ENCODE measurements at regions of chr16 and their contacts with region 1.

Region 1: GRCh38 chr16:30429678-30430427 is at the start of gene DCTPP1:
- DNase-seq: peak; percentile 94 to 99 (median 95)
- ATAC-seq: peak; percentile 99
- H3K4me3 ChIP-seq: peak within 1 kb of the TSS; percentile 75
- H3K27ac ChIP-seq: peak within 1 kb of the TSS; percentile 84
- H3K4me1 ChIP-seq: peaks cover 15 to 36% of the 10 kb centered on the region in 2 experiments
- H3K27me3 ChIP-seq: no peaks in the 10 kb centered on the region
- CTCF ChIP-seq: peak; percentile 82 to 96 (median 88)
- EP300 ChIP-seq: peak; percentile 52
- POLR2A ChIP-seq: peak; percentile 82
- RAD21 ChIP-seq: peak; percentile 85 to 87
- polyA plus RNA-seq, gene DCTPP1: 45.0 to 80.6 TPM

Region 2: DNA sequence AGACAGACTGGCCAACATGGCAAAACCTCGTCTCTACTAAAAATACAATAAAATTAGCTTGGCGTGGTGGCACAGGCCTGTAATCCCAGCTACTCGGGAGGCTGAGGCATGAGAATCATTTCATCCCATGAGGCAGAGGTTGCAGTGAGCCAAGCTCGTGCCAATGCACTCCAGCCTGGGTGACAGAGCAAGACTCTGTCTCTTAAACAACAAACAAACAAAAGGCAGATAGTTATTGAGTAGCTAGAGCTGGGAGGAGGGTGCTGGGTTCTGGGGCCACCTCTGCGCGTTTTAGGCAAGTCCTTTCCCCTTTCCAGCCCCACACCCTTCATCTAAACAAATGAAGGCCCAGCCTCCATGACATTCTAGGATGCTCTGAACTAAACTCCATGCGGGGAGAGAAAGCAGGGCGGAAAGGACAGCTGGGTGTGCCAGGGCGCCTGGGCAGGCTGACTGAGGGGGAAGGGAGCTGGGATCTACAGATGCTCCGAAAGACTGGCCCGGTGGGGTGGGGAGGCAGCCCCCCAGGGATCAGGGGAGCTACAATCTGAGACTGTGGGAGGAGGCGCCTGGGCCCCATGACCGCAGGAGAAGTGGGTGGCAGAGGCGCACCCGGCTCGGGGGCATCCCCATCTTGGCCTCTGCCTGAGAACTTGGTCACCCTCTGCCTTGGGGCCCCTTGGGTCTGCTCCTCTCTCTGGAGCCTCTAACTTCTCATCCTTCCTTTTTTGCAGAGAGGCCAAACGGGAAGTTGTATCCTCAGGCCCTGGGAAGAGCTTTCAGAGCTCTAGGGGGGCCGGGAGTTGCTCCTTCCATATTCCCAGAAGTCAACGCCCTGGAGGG is 43.6 kb after region 1 on chr16:
- CTCF ChIA-PET with region 1: no interaction called
- POLR2A ChIA-PET with region 1: no interaction called
- in situ Hi-C with region 1: no loop called
- intact Hi-C with region 1: no loop called
- DNase-seq: no peak
- ATAC-seq: no peak
- H3K4me3 ChIP-seq: no peak overlapping the region
- H3K27ac ChIP-seq: no peak overlapping the region
- H3K4me1 ChIP-seq: peaks cover 0 to 15% of the 10 kb centered on the region in 2 experiments; a peak in 1 of 5 replicates
- H3K27me3 ChIP-seq: no peaks in the 10 kb centered on the region
- CTCF ChIP-seq: no peak
- EP300 ChIP-seq: no peak
- POLR2A ChIP-seq: no peak
- RAD21 ChIP-seq: no peak

Region 3: GRCh38 chr16:30628627-30629540 is 199.0 kb after region 1 on chr16:
- CTCF ChIA-PET with region 1: interaction called, 23 read pairs
- POLR2A ChIA-PET with region 1: interaction called, 3 read pairs
- in situ Hi-C with region 1: loop called (anchors 10 kb)
- intact Hi-C with region 1: loop called (anchors 1 kb)
- DNase-seq: peak; percentile 68 to 92 (median 75)
- ATAC-seq: peak; percentile 98
- H3K4me3 ChIP-seq: no peak overlapping the region
- H3K27ac ChIP-seq: peak overlapping the region; percentile 41
- H3K4me1 ChIP-seq: peaks cover 4 to 15% of the 10 kb centered on the region in 2 experiments; a peak in 2 of 5 replicates
- H3K27me3 ChIP-seq: no peaks in the 10 kb centered on the region
- CTCF ChIP-seq: peak; percentile 86 to 95 (median 91)
- EP300 ChIP-seq: peak; percentile 34; the same call in 1 of the 2 replicates
- POLR2A ChIP-seq: no peak
- RAD21 ChIP-seq: peak; percentile 90 to 95

Region 4: GRCh38 chr16:30657866-30658730 is 228.2 kb after region 1 on chr16 and contains the start of gene FBRS:
- CTCF ChIA-PET with region 1: interaction called, 10 read pairs
- POLR2A ChIA-PET with region 1: interaction called, 9 read pairs
- in situ Hi-C with region 1: no loop called
- intact Hi-C with region 1: loop called (anchors 1 kb)
- DNase-seq: peak; percentile 93 to 100 (median 96)
- ATAC-seq: peak; percentile 88
- H3K4me3 ChIP-seq: peak within 1 kb of the TSS; percentile 90
- H3K27ac ChIP-seq: peak within 1 kb of the TSS; percentile 99
- H3K4me1 ChIP-seq: peaks cover 20 to 52% of the 10 kb centered on the region in 2 experiments; a peak in 4 of 5 replicates
- H3K27me3 ChIP-seq: no peaks in the 10 kb centered on the region
- CTCF ChIP-seq: peak; percentile 90 to 97 (median 90)
- EP300 ChIP-seq: no peak
- POLR2A ChIP-seq: peak; percentile 95
- RAD21 ChIP-seq: peak; percentile 78 to 82
- polyA plus RNA-seq, gene FBRS: 0.32 to 0.46 TPM